GM12878 (cell line): ENCODE measurements at regions of chr13 and their contacts with region 1.

Region 1: DNA sequence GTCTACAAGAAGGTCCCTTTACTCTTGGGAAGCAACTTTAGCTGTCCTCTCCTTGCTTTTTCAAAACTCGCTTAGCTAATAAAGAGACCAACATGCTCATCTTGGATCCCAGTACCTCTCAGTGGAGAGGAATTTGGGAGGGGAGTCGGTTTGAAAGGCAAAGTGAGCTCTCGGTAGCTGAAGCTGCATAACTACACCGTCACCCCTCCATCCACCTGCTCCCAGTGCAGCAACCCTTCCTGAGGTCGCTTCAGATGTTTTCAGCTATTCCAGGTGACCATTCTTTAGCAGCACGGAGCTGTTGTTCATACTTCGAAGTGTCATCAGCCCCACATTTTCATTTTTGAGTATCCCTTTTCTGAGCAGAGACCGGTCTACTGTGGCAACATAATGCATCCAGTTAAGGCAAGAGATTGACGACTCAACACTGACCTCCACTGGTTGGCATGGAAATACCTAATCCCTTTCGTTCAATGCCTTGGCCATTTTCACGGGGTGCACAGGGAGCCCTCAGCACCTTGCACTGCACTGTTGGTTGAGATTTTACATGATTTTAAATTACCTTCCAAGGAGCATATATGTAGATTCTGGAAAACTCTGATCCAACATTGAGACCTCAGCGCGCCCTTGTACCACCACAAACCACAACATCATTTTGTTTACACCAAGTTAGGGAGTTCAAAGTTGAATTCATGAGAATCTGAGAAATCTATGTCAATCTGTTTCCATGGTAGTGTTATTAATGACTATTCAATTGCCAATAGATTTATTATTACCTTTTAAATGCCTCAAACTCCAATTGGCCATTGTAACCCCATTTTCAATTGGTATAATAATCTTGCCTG is 42.2 kb downstream of the DLEU7 start:
- DNase-seq: peak; percentile 69
- ATAC-seq: peak; percentile 99
- H3K4me3 ChIP-seq: no peak overlapping the region; the same call in 1 of the 2 replicates
- H3K27ac ChIP-seq: no peak overlapping the region
- H3K4me1 ChIP-seq: peaks cover 11% of the 10 kb centered on the region
- H3K27me3 ChIP-seq: no peaks in the 10 kb centered on the region
- CTCF ChIP-seq: peak; percentile 76 to 86 (median 85)
- EP300 ChIP-seq: no peak
- POLR2A ChIP-seq: no peak
- RAD21 ChIP-seq: peak; percentile 95

Region 2: GRCh38 chr13:49996951-49997895 is 804.1 kb before region 1 on chr13 and contains the start of gene TRIM13:
- CTCF ChIA-PET with region 1: interaction called, 13 read pairs
- POLR2A ChIA-PET with region 1: no interaction called
- RAD21 ChIA-PET with region 1: interaction called, 16 read pairs
- SMC1A ChIA-PET with region 1: interaction called, 21 read pairs
- in situ Hi-C with region 1: no loop called
- intact Hi-C with region 1: loop called (anchors 5 kb)
- DNase-seq: peak; percentile 48
- ATAC-seq: peak; percentile 84
- H3K4me3 ChIP-seq: peak within 1 kb of the TSS; percentile 92
- H3K27ac ChIP-seq: peak within 1 kb of the TSS; percentile 96
- H3K4me1 ChIP-seq: peaks cover 12% of the 10 kb centered on the region
- H3K27me3 ChIP-seq: no peaks in the 10 kb centered on the region
- CTCF ChIP-seq: peak; percentile 80 to 87 (median 81)
- EP300 ChIP-seq: 0 out of 4 replicates have a peak, but pooled peaks of 1 of the 2 experiments have one; percentile 26
- POLR2A ChIP-seq: peak; percentile 91
- RAD21 ChIP-seq: peak; percentile 68
- polyA plus RNA-seq, gene TRIM13: 25.7 to 33.8 TPM

Region 3: DNA sequence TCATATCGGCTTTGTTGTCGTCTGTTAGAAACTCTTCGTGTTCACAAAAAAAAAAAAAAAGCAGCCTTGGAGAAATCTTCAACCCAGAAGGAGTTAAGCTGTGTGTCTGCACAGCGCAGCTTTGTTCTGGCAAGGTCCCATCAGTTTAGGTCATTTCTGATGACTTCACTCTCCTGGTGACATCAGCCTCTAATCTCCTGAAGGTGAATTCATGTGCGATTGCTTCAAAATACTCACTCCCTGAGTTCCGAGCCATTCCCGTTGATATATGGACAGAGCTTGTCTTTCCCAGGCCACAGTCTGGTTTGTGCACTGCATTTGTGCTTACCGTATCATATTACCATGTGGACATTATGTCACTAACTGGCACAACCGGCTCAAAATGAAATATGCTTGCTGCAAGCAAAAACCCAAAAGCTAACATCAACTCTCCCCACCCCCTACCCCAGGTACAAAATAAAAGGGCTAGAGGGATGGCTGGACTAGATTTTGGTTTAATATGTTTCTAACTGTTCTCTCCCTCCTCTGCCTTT is 443.7 kb before region 1 on chr13:
- CTCF ChIA-PET with region 1: interaction called, 3 read pairs
- POLR2A ChIA-PET with region 1: no interaction called
- RAD21 ChIA-PET with region 1: no interaction called
- SMC1A ChIA-PET with region 1: interaction called, 3 read pairs
- in situ Hi-C with region 1: no loop called
- intact Hi-C with region 1: loop called (anchors 5 kb)
- DNase-seq: no peak
- ATAC-seq: no peak
- H3K4me3 ChIP-seq: no peak overlapping the region
- H3K27ac ChIP-seq: no peak overlapping the region
- H3K4me1 ChIP-seq: peaks cover 8% of the 10 kb centered on the region; the same call in 1 of the 2 replicates
- H3K27me3 ChIP-seq: peaks cover 0 to 10% of the 10 kb centered on the region in 2 experiments; a peak in 3 of 4 replicates
- CTCF ChIP-seq: no peak
- EP300 ChIP-seq: no peak
- POLR2A ChIP-seq: no peak
- RAD21 ChIP-seq: no peak

Region 4: DNA sequence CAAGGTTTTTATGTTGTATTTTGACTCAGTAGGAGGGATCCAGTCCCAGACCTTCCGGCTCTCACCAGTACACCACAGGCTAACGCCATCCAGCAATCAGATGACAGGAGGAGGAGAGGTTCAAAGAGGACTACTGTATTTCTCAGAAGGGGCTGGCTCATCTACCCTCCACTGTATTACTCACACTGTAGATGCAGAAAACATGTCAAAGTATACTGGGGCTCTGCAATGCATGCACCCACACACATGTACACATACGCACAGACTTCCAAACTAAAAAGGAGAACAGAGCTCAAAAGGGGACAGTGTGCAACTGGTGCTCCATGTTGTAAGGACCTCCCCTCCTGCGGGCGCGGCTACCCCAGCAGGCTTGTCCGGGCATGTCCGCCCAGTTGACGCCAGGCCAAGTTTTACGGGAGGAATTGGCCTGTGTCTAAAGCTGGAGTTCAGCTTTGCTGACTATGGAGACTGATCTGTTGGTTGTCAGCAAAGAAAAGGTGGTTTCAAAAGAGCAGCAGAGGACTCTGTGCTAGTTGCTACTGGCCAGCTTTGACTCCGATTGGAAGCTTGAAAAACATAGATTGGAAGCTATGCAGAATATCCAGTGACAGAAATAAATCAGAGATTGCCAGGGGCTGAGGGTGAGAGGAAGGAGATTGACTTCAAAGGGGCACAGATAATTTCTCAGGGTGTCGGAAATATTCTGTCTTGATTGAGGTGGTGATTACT is 272.0 kb before region 1 on chr13:
- CTCF ChIA-PET with region 1: interaction called, 5 read pairs
- POLR2A ChIA-PET with region 1: no interaction called
- RAD21 ChIA-PET with region 1: interaction called, 4 read pairs
- SMC1A ChIA-PET with region 1: interaction called, 3 read pairs
- in situ Hi-C with region 1: no loop called
- intact Hi-C with region 1: loop called (anchors 10 kb)
- DNase-seq: no peak
- ATAC-seq: no peak
- H3K4me3 ChIP-seq: no peak overlapping the region
- H3K27ac ChIP-seq: no peak overlapping the region
- H3K4me1 ChIP-seq: no peaks in the 10 kb centered on the region
- H3K27me3 ChIP-seq: peaks cover 2 to 5% of the 10 kb centered on the region in 2 experiments; a peak in 3 of 4 replicates
- CTCF ChIP-seq: no peak
- EP300 ChIP-seq: no peak
- POLR2A ChIP-seq: no peak
- RAD21 ChIP-seq: no peak

Region 5: DNA sequence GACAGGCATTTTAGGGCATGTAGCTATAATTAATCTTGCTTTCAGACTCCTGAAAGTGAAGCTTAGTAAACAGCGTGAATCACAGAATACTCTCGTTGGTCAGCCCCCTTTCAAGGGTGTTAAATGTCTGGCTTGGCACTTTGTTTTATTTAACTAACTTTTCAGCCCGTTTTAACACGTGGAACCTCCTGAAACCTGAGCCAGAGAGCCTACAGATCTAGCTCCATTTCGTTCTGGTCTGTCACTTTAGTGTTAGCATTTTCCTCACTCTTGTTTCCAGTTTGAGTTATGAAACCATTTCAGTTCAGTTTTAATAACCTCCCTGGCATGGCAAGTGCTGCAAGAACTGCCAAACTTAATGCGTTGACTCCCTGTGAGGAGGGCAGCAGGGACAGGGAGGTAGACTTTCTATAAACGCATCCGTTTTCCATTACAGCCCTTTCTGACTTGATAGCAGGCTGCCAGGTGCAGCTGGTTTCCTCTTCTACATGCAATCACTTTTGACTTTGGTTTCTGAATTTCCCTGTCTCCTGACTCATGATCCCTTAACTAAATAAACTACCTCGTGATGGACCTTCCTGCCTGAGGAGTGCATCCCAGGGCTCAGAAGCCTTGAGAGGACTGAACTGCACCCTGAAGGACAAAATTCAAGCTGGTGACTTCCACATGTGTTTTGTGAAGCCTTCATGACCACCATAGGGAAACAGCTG is 150.6 kb before region 1 on chr13:
- CTCF ChIA-PET with region 1: no interaction called
- POLR2A ChIA-PET with region 1: no interaction called
- RAD21 ChIA-PET with region 1: interaction called, 4 read pairs
- SMC1A ChIA-PET with region 1: interaction called, 13 read pairs
- in situ Hi-C with region 1: no loop called
- intact Hi-C with region 1: no loop called
- DNase-seq: no peak
- ATAC-seq: peak; percentile 35
- H3K4me3 ChIP-seq: no peak overlapping the region
- H3K27ac ChIP-seq: no peak overlapping the region
- H3K4me1 ChIP-seq: no peaks in the 10 kb centered on the region
- H3K27me3 ChIP-seq: no peaks in the 10 kb centered on the region
- CTCF ChIP-seq: no peak
- EP300 ChIP-seq: no peak
- POLR2A ChIP-seq: no peak
- RAD21 ChIP-seq: no peak

Region 6: DNA sequence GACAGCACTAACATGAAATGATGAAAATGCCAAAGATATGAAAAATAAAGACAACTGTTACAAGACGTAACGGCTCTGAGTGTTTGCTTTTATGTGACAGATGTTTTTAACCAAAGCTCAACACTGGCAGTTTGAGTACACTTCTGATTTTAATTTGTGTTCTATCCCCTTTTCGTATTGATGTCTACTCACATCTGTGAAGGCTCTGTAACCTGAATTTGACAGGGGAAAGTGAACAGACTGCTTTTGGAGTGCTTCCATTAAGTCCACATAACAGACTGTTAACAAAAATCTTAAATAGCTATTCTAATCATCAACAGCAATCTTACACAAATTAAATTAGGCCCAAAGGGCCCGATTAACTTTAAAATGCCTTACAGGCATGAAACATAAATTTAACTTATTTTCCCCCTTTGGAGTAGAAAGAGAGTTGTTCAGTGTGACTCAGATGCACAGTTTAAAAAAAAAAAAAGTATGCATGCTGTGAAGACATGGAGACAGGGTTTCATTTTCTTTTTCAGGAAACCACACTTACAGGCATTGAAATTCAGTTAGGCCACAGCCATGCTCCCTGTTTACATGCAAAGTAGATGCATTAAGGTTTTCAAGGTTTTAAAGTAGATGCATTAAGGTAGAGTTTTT is 92.0 kb after region 1 on chr13:
- CTCF ChIA-PET with region 1: interaction called, 5 read pairs
- POLR2A ChIA-PET with region 1: no interaction called
- RAD21 ChIA-PET with region 1: interaction called, 10 read pairs
- SMC1A ChIA-PET with region 1: interaction called, 8 read pairs
- in situ Hi-C with region 1: no loop called
- intact Hi-C with region 1: no loop called
- DNase-seq: no peak
- ATAC-seq: peak; percentile 88
- H3K4me3 ChIP-seq: peak overlapping the region; percentile 50; the same call in 1 of the 2 replicates
- H3K27ac ChIP-seq: peak overlapping the region; percentile 93
- H3K4me1 ChIP-seq: peaks cover 34% of the 10 kb centered on the region
- H3K27me3 ChIP-seq: no peaks in the 10 kb centered on the region
- CTCF ChIP-seq: no peak
- EP300 ChIP-seq: peak; percentile 62 to 78; a peak in 3 of 4 replicates
- POLR2A ChIP-seq: no peak
- RAD21 ChIP-seq: no peak